Heart left ventricle (tissue), 16 donors: ENCODE measurements at regions of chr6 and their contacts with region 1.

Region 1: GRCh38 chr6:42790549-42791181 is 8.8 kb downstream of the BICRAL start:
- DNase-seq: no peak
- ATAC-seq: peak in 3 of 4 donors; percentile 29 to 66 (median 60)
- H3K4me3 ChIP-seq: no peak overlapping the region
- H3K27ac ChIP-seq: peak overlapping the region in 4 of 12 donors; percentile 12 to 64 (median 34)
- H3K4me1 ChIP-seq: peaks cover 3 to 57% (median 46%) of the 10 kb centered on the region in 12 donors
- H3K27me3 ChIP-seq: no peaks in the 10 kb centered on the region
- CTCF ChIP-seq: no peak
- POLR2A ChIP-seq: no peak

Region 2: GRCh38 chr6:42819803-42820511 is 29.3 kb after region 1 on chr6:
- intact Hi-C with region 1: loop called in 1 of 10 experiments (anchors 5 kb)
- DNase-seq: no peak
- ATAC-seq: peak in 2 of 4 donors; percentile 56 to 58
- H3K4me3 ChIP-seq: peak overlapping the region in 2 of 12 donors; percentile 20 to 39
- H3K27ac ChIP-seq: peak overlapping the region in 10 of 12 donors; percentile 47 to 79 (median 60)
- H3K4me1 ChIP-seq: peaks cover 0 to 30% (median 17%) of the 10 kb centered on the region in 12 donors
- H3K27me3 ChIP-seq: no peaks in the 10 kb centered on the region
- CTCF ChIP-seq: peak in 2 of 12 donors; percentile 16 to 25
- POLR2A ChIP-seq: no peak

Region 3: GRCh38 chr6:42851599-42851998 is 60.9 kb after region 1 on chr6:
- intact Hi-C with region 1: loop called in 1 of 10 experiments (anchors 10 kb)
- DNase-seq: no peak
- ATAC-seq: no peak
- H3K4me3 ChIP-seq: no peak overlapping the region
- H3K27ac ChIP-seq: no peak overlapping the region
- H3K4me1 ChIP-seq: no peaks in the 10 kb centered on the region
- H3K27me3 ChIP-seq: no peaks in the 10 kb centered on the region
- CTCF ChIP-seq: no peak
- POLR2A ChIP-seq: no peak

Region 4: GRCh38 chr6:42960243-42961019 is 169.8 kb after region 1 on chr6 and contains the start of gene GNMT:
- intact Hi-C with region 1: no loop called
- DNase-seq: peak; percentile 35 to 79 (median 71)
- ATAC-seq: peak; percentile 50 to 90 (median 80)
- H3K4me3 ChIP-seq: peak within 1 kb of the TSS; percentile 23 to 63 (median 51)
- H3K27ac ChIP-seq: peak within 1 kb of the TSS in 4 of 12 donors; percentile 19 to 75 (median 35)
- H3K4me1 ChIP-seq: peaks cover 4 to 18% (median 13%) of the 10 kb centered on the region in 12 donors
- H3K27me3 ChIP-seq: peaks cover 0 to 6% (median 0%) of the 10 kb centered on the region in 9 donors
- CTCF ChIP-seq: no peak
- POLR2A ChIP-seq: peak in 1 of 2 donors; percentile 18
- total RNA-seq, gene GNMT: 0.36 to 32.0 (median 1.1) TPM